T-cell (primary cell): ENCODE measurements at regions of chr7 and their contacts with region 1.

Region 1: GRCh38 chr7:28926871-28927597 is 31.1 kb downstream of the TRIL start:
- DNase-seq: peak; percentile 8 to 80 (median 29)
- ATAC-seq: peak; percentile 74 to 96 (median 86)
- H3K4me3 ChIP-seq: peak overlapping the region; percentile 57 to 84
- H3K4me3 Mint-ChIP-seq: peak overlapping the region; percentile 84 to 88 (median 86)
- H3K27ac ChIP-seq: no peak overlapping the region
- H3K27ac Mint-ChIP-seq: peak overlapping the region in 1 of 2 donors; percentile 46
- H3K4me1 ChIP-seq: peaks cover 4 to 5% of the 10 kb centered on the region in 2 experiments
- H3K4me1 Mint-ChIP-seq: peaks cover 24 to 30% (median 27%) of the 10 kb centered on the region in 3 donors
- H3K27me3 ChIP-seq: peaks cover 0 to 7% of the 10 kb centered on the region in 2 experiments
- H3K27me3 Mint-ChIP-seq: peaks cover 0 to 6% of the 10 kb centered on the region in 2 donors

Region 2: GRCh38 chr7:28890137-28890536 is 36.9 kb before region 1 on chr7:
- CTCF ChIA-PET with region 1: no interaction called
- POLR2A ChIA-PET with region 1: no interaction called
- DNase-seq: no peak
- ATAC-seq: no peak
- H3K4me3 ChIP-seq: no peak overlapping the region
- H3K4me3 Mint-ChIP-seq: no peak overlapping the region
- H3K27ac ChIP-seq: no peak overlapping the region
- H3K27ac Mint-ChIP-seq: no peak overlapping the region
- H3K4me1 ChIP-seq: no peaks in the 10 kb centered on the region
- H3K4me1 Mint-ChIP-seq: no peaks in the 10 kb centered on the region
- H3K27me3 ChIP-seq: no peaks in the 10 kb centered on the region
- H3K27me3 Mint-ChIP-seq: peaks cover 13 to 30% of the 10 kb centered on the region in 2 donors

Region 3: DNA sequence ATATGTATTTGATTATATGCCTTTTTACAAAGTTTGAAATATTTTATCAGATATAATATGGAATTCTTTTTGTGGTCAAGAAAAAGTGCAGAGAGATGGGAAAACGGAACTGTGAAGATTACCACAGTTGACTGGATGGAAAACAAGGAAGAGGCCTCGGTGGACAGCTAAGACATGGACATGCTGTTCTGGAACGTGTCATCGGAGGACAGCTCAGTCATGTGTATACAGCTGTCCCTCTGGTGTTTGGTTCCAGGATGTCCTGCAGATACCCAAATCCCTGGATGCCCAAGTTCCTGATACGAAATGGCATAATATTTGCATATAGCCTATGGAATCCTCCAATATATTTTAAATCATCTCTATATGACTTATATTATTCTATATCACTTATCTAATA is 18.3 kb before region 1 on chr7:
- CTCF ChIA-PET with region 1: interaction called, 6 to 11 read pairs
- POLR2A ChIA-PET with region 1: no interaction called
- DNase-seq: no peak
- ATAC-seq: no peak
- H3K4me3 ChIP-seq: no peak overlapping the region
- H3K4me3 Mint-ChIP-seq: no peak overlapping the region
- H3K27ac ChIP-seq: no peak overlapping the region
- H3K27ac Mint-ChIP-seq: no peak overlapping the region
- H3K4me1 ChIP-seq: no peaks in the 10 kb centered on the region
- H3K4me1 Mint-ChIP-seq: no peaks in the 10 kb centered on the region
- H3K27me3 ChIP-seq: peaks cover 0 to 3% of the 10 kb centered on the region in 2 experiments
- H3K27me3 Mint-ChIP-seq: peaks cover 11 to 19% of the 10 kb centered on the region in 2 donors

Region 4: DNA sequence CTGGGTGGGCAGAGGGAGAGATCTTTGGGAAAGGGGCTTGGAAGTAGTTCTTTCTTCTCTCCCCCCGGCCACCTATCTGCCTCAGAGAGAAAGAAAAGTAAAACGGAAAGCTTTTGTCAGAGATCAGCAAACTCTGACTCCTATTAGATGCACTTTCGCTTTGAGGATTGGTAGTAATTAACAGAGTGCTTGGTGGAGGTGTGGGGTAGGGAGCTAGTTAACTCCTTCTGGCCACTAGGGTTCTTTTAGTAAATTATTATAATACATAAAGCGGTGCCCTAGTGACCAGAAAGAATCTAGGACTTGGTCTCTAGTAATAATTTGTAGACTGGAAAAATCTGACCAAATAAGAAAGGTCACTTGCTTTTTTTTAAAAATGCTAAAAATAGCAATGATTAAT is 164.7 kb after region 1 on chr7:
- CTCF ChIA-PET with region 1: interaction called, 3 to 18 read pairs
- POLR2A ChIA-PET with region 1: interaction called in 1 of 2 experiments, 3 read pairs
- DNase-seq: peak in 2 of 35 experiments; percentile 2 to 8
- ATAC-seq: peak in 1 of 4 experiments; percentile 86
- H3K4me3 ChIP-seq: peak overlapping the region in 1 of 2 donors; percentile 52
- H3K4me3 Mint-ChIP-seq: peak overlapping the region; percentile 44 to 82 (median 65)
- H3K27ac ChIP-seq: no peak overlapping the region
- H3K27ac Mint-ChIP-seq: peak overlapping the region in 1 of 2 donors; percentile 94
- H3K4me1 ChIP-seq: peaks cover 0 to 6% of the 10 kb centered on the region in 2 experiments
- H3K4me1 Mint-ChIP-seq: peaks cover 13 to 19% (median 15%) of the 10 kb centered on the region in 3 donors
- H3K27me3 ChIP-seq: peaks cover 0 to 7% of the 10 kb centered on the region in 2 experiments
- H3K27me3 Mint-ChIP-seq: peaks cover 6 to 19% of the 10 kb centered on the region in 2 donors

Region 5: DNA sequence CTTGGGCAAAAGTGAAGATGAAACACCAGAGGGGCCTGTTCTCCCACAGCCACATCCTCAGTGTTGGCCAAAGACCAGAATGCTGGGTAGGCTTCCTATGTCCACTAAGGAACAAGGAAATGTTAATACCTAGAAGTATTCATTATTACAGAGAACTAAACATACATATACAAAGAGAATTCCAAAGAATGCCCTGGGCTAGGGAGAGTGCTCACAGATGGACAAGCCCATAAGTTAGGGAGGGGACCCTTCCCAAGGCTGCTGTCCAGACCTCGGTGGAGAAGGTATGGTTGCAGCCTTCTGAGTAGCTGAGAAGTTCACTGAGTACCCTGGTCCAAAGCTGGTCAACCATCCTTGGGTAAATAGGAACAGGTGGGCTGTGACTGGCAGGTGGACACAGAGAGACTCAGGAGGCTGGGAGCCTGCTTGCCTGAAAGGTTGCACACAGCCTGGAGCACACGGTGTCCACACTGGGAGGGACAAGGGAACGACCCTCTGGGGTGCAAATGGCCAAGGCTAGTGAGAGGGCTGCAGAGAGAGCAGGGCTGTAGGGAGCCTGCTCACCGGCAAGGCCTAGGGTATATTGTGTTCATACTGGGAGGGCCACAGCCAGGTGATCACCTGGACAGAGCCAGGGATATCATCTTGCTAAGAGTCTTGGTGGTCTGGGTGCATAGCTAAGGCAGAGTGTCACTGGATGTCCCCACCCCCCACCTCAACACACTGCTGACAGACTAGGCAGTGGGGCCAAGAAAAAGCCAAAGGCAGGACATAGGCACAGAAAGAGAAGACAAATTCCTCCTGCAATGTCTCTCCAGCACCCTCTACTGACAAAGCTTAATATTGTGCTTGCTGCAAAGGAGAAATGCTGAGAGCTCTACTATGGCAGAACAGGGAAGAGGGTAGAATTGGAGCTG is 179.0 kb after region 1 on chr7:
- CTCF ChIA-PET with region 1: interaction called, 4 to 61 read pairs
- POLR2A ChIA-PET with region 1: no interaction called
- DNase-seq: peak in 4 of 35 experiments; percentile 1 to 40 (median 14)
- ATAC-seq: peak in 2 of 4 experiments; percentile 46 to 64
- H3K4me3 ChIP-seq: no peak overlapping the region
- H3K4me3 Mint-ChIP-seq: no peak overlapping the region
- H3K27ac ChIP-seq: no peak overlapping the region
- H3K27ac Mint-ChIP-seq: no peak overlapping the region
- H3K4me1 ChIP-seq: no peaks in the 10 kb centered on the region
- H3K4me1 Mint-ChIP-seq: peaks cover 0 to 5% (median 2%) of the 10 kb centered on the region in 3 donors
- H3K27me3 ChIP-seq: no peaks in the 10 kb centered on the region
- H3K27me3 Mint-ChIP-seq: peaks cover 1 to 13% of the 10 kb centered on the region in 2 donors

Region 6: GRCh38 chr7:29401769-29402168 is 474.7 kb after region 1 on chr7:
- CTCF ChIA-PET with region 1: interaction called, 16 to 105 read pairs
- POLR2A ChIA-PET with region 1: interaction called in 1 of 2 experiments, 10 read pairs
- DNase-seq: no peak
- ATAC-seq: no peak
- H3K4me3 ChIP-seq: no peak overlapping the region
- H3K4me3 Mint-ChIP-seq: no peak overlapping the region
- H3K27ac ChIP-seq: no peak overlapping the region
- H3K27ac Mint-ChIP-seq: no peak overlapping the region
- H3K4me1 ChIP-seq: no peaks in the 10 kb centered on the region
- H3K4me1 Mint-ChIP-seq: peaks cover 0 to 6% (median 2%) of the 10 kb centered on the region in 3 donors
- H3K27me3 ChIP-seq: no peaks in the 10 kb centered on the region
- H3K27me3 Mint-ChIP-seq: peaks cover 0 to 1% of the 10 kb centered on the region in 2 donors

Region 7: GRCh38 chr7:29408841-29409243 is 481.8 kb after region 1 on chr7:
- CTCF ChIA-PET with region 1: interaction called, 58 to 105 read pairs
- POLR2A ChIA-PET with region 1: no interaction called
- DNase-seq: peak in 28 of 35 experiments; percentile 2 to 79 (median 27)
- ATAC-seq: peak; percentile 48 to 62 (median 55)
- H3K4me3 ChIP-seq: no peak overlapping the region
- H3K4me3 Mint-ChIP-seq: no peak overlapping the region
- H3K27ac ChIP-seq: no peak overlapping the region
- H3K27ac Mint-ChIP-seq: no peak overlapping the region
- H3K4me1 ChIP-seq: no peaks in the 10 kb centered on the region
- H3K4me1 Mint-ChIP-seq: no peaks in the 10 kb centered on the region
- H3K27me3 ChIP-seq: no peaks in the 10 kb centered on the region
- H3K27me3 Mint-ChIP-seq: no peaks in the 10 kb centered on the region